Dorsolateral prefrontal cortex (tissue), 120 donors: ENCODE measurements at regions of chr4 and their contacts with region 1.

Region 1: DNA sequence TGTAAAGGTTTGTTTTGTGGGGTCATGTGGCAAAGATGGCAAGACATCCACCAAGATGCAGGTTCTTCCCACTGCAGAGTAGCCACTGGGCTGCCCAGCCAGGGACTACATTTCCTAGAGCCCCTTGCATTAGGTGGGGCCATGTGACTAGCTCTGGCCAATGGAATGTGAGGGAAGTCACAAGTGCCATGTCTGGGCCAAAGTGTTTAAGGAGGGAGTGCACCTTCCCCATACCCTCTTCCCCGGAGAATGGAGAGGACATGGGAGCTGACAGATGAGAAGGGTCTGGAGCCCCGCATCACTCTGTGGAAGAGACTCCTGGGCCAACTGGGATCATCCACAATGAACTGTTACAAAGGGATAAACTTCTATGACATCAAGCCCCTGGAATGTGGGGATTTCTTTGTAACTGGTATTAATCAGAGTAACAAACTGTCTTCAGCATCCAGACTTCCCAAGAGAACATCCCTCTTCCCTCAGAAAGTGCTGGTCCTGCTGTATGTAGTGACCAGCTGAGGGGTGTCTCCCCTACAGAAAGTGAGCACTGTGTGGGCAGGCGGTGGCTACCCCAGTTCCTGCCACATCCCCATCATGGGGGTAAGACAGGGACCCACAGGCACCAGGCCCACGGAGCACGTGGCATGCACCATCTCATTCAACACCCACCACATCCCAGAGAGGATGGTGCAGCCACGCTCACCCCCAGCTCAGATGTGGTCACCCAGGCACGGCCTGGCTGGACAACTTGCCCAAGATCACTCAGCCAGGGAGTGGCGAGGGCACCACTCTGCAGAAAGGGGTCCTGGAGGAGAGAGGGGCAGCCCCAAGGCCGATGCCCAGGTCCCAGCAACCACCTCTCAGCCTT is 10.9 kb downstream of the PPP2R2C start:
- DNase-seq: peak in 4 of 10 donors; percentile 2 to 34 (median 30)
- H3K4me3 ChIP-seq: no peak overlapping the region
- H3K27ac ChIP-seq: peak overlapping the region in 58 of 59 donors; percentile 54 to 100 (median 95)
- H3K27me3 ChIP-seq: no peaks in the 10 kb centered on the region
- CTCF ChIP-seq: no peak

Region 2: GRCh38 chr4:6134612-6135220 is 326.8 kb before region 1 on chr4:
- intact Hi-C with region 1: no loop called
- DNase-seq: peak in 3 of 10 donors; percentile 48 to 77 (median 54)
- H3K4me3 ChIP-seq: no peak overlapping the region
- H3K27ac ChIP-seq: no peak overlapping the region
- H3K27me3 ChIP-seq: no peaks in the 10 kb centered on the region
- CTCF ChIP-seq: peak in 38 of 56 donors; percentile 9 to 61 (median 32)

Region 3: DNA sequence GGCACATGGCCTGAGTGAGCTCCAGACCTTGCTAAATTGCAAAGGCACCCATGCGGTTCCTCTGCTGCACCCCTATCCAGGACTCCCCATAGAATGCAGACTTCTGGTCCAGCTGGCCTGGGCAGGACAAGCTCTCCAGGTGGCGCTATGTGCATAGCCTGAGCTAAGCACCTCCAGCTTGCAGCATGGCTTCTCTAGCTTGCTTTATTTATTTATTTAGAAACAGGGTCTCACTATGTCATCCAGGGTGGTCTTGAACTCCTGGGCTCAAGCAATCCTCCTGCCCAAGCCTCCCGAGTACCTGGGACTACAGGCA is 197.3 kb before region 1 on chr4:
- intact Hi-C with region 1: no loop called
- DNase-seq: no peak
- H3K4me3 ChIP-seq: no peak overlapping the region
- H3K27ac ChIP-seq: peak overlapping the region in 4 of 59 donors; percentile 43 to 51 (median 45)
- H3K27me3 ChIP-seq: no peaks in the 10 kb centered on the region
- CTCF ChIP-seq: peak in 22 of 56 donors; percentile 6 to 42 (median 20)

Region 4: GRCh38 chr4:6419452-6420028 is 42.0 kb before region 1 on chr4:
- intact Hi-C with region 1: loop called in 1 of 2 experiments (anchors 2 kb)
- DNase-seq: peak in 8 of 10 donors; percentile 57 to 81 (median 67)
- H3K4me3 ChIP-seq: no peak overlapping the region
- H3K27ac ChIP-seq: peak overlapping the region in 54 of 59 donors; percentile 14 to 86 (median 58)
- H3K27me3 ChIP-seq: no peaks in the 10 kb centered on the region
- CTCF ChIP-seq: no peak